Heart left ventricle (tissue), 16 donors: ENCODE measurements at regions of chr3 and their contacts with region 1.

Region 1: GRCh38 chr3:194573691-194574437 is 59.4 kb downstream of the TMEM44 start:
- DNase-seq: peak in 4 of 5 donors; percentile 53 to 68 (median 54)
- ATAC-seq: peak; percentile 48 to 70 (median 66)
- H3K4me3 ChIP-seq: no peak overlapping the region
- H3K27ac ChIP-seq: peak overlapping the region in 7 of 12 donors; percentile 71 to 91 (median 86)
- H3K4me1 ChIP-seq: peaks cover 0 to 80% (median 36%) of the 10 kb centered on the region in 12 donors
- H3K27me3 ChIP-seq: no peaks in the 10 kb centered on the region
- CTCF ChIP-seq: peak; percentile 41 to 68 (median 60)
- POLR2A ChIP-seq: no peak

Region 2: DNA sequence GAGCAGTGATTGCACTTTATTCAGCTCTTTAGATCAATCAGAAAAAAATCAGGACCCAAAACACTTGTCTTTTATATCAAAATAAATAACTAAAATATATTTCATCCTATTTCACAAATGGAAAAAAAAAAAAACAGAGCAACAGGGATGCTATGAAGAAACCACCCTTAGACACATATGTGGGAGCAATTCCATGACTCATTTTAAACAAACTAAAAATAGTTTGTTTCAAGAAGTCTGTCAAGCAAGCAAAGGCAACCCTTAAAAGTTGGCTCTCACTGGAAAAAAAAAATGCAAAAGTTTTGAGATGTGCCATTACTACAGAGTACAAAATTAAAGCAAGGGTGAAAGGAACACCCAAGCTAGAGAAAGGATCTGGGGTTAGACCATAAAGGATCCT is 92.8 kb before region 1 on chr3:
- intact Hi-C with region 1: loop called in 8 of 10 experiments (anchors 2 to 5 kb)
- DNase-seq: no peak
- ATAC-seq: no peak
- H3K4me3 ChIP-seq: no peak overlapping the region
- H3K27ac ChIP-seq: peak overlapping the region in 5 of 12 donors; percentile 2 to 54 (median 3)
- H3K4me1 ChIP-seq: peaks cover 0 to 84% (median 52%) of the 10 kb centered on the region in 12 donors
- H3K27me3 ChIP-seq: no peaks in the 10 kb centered on the region
- CTCF ChIP-seq: no peak
- POLR2A ChIP-seq: no peak

Region 3: DNA sequence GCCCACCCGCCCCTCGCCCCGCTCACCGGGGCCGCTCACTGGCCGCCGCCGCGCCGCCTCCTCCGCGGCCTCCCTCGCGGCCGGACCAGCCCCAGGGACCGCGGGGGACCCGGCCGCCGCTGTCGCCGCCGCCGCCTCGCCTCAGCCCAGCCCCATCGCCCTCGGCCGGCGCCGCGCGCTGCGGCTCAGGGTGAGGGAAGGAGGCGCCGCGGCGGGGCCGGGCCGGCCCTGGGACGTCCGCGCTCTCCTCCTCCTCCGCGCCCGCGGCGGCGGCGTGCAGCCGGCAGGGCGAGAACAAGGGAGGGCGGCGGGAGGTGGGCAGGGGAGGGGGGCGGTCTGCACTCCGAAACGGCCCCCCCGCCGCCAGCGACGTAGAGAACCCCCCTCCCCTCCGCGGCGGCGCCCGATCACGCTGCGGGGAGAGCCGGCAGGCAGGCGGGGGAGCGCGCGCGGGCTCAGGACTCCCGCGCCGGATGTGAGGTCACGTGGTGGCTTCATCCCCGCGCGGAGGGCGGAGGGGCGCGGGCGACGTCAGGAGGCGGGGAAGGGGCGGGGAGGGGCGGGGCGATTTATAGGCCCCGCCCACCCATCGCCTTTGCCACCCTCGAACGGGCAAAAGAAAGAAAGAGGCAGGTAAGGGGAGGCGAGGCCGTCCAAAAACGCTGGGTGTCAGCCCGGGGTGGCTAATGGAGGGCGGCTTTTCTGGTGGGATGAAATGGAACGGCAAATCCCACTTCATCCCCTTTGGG is 87.2 kb before region 1 on chr3 and contains the start of gene ATP13A3:
- intact Hi-C with region 1: loop called in 7 of 10 experiments (anchors 5 kb)
- DNase-seq: peak; percentile 90 to 94 (median 93)
- ATAC-seq: peak; percentile 85 to 96 (median 94)
- H3K4me3 ChIP-seq: peak within 1 kb of the TSS; percentile 57 to 91 (median 72)
- H3K27ac ChIP-seq: peak within 1 kb of the TSS; percentile 74 to 93 (median 91)
- H3K4me1 ChIP-seq: peaks cover 0 to 79% (median 23%) of the 10 kb centered on the region in 12 donors
- H3K27me3 ChIP-seq: no peaks in the 10 kb centered on the region
- CTCF ChIP-seq: peak in 1 of 12 donors; percentile 6
- POLR2A ChIP-seq: peak in 1 of 2 donors; percentile 91
- total RNA-seq, gene ATP13A3: 37.8 to 237 (median 105) TPM

Region 4: DNA sequence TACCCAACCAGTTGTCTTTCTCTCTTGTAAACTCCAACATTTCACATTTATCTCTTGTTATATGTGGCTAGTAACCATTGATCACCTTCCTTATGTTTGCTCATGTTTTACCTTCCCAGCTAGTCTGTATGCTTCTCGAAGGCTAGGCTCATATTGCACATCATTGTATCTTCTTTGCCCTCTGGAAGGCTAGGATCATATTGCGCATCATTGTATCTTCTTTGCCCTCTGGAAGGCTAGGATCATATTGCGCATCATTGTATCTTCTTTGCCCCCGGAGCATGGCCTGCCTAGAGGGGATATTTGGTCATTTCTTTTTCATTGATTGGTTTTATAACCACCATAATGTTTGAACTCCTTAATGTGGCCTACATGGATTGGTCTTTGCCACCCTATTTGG is 47.7 kb before region 1 on chr3:
- intact Hi-C with region 1: loop called in 1 of 10 experiments (anchors 5 kb)
- DNase-seq: no peak
- ATAC-seq: no peak
- H3K4me3 ChIP-seq: no peak overlapping the region
- H3K27ac ChIP-seq: peak overlapping the region in 1 of 12 donors; percentile 76
- H3K4me1 ChIP-seq: peaks cover 0 to 27% (median 5%) of the 10 kb centered on the region in 12 donors
- H3K27me3 ChIP-seq: no peaks in the 10 kb centered on the region
- CTCF ChIP-seq: no peak
- POLR2A ChIP-seq: no peak

Region 5: DNA sequence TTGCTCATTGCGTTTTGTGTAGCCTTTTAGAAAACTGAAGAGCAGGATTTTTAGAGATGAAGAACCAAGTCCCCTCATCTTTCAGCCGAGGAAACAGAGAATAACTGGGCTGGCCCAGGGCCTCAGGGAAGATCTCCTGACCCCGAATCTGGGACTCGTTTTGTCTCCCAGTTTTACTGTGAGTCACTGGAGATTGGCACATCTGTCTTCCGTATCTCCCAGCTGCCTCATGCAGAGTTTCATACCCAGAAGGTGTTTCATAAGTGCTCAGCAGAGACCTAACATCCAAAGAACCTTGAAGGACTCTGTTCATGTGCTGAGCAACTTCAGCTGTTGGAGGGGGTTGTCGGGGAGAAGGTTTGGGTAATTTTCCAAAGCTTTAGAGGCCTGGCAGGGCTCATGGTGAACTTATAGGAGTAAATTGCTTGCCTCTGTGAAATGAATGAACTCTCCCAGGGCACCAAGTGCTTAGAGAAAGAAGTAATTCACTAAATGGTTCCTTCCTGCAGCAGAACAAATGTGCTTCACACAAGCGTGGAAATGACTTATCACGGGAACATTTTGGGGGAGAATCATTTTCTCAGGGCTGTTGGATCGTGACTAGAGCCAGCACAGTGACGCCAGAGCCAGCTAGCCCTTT is 233.2 kb after region 1 on chr3:
- intact Hi-C with region 1: no loop called
- DNase-seq: no peak
- ATAC-seq: no peak
- H3K4me3 ChIP-seq: no peak overlapping the region
- H3K27ac ChIP-seq: no peak overlapping the region
- H3K4me1 ChIP-seq: no peaks in the 10 kb centered on the region
- H3K27me3 ChIP-seq: no peaks in the 10 kb centered on the region
- CTCF ChIP-seq: no peak
- POLR2A ChIP-seq: no peak